GM12878 (cell line): ENCODE measurements at regions of chr7 and their contacts with region 1.

Region 1: DNA sequence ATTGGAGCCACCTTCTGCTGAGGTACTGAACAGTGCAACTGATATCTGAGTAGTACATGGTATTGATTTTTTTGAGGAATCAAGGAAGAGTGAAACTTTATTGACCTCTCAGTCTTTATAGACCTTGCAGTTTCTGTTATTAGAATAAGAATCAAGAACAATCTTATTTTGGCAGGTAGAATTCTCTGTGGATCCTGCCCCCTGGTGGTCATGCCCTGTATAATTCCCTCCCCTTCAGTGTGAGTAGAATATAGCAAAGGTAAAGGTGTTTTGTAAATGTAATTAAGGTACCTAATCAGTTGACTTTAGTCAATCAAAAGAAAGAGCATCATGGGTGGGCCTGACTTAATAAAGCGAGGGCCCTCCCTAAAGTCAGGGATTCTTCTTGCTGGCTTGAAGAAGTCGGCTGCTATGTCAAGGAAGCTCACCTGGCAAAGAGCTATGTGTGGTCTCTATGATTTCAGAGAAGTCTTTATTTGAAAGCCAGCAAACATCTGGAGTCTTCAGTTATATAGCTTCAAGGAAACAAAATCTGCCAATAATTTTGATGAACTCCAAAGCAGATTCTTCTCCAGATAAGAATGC is 142.8 kb downstream of the LSM5 start:
- DNase-seq: no peak
- ATAC-seq: peak; percentile 70
- H3K4me3 ChIP-seq: no peak overlapping the region
- H3K27ac ChIP-seq: no peak overlapping the region
- H3K4me1 ChIP-seq: no peaks in the 10 kb centered on the region
- H3K27me3 ChIP-seq: no peaks in the 10 kb centered on the region
- CTCF ChIP-seq: peak; percentile 62 to 66 (median 64)
- EP300 ChIP-seq: no peak
- POLR2A ChIP-seq: no peak
- RAD21 ChIP-seq: peak; percentile 57

Region 2: DNA sequence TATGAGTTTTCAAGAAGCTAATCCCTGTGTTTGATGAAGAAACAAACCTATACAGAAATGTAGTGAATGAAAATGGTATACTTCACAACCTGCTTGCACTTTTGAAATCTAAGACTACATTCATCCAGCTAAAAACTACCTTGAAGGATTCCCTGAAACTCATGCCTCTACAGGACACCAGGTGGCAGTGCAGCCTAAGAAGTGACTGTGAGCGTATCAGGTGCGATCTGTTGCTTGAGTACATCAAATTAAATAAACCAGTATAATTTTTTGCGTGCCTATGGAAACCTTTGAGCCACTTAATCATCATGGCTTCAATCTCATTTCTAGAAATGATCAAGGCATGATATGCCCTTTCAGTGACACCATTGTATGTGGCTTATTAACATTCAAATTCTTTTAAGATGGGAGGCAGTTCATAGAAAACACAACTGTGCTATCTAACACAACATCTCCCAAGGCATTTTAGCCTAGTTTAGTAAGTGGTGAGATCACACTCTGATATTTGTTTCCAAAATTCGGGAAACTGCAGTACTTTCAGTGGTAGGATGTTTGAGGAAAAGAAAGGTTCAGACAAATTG is 603.0 kb before region 1 on chr7:
- CTCF ChIA-PET with region 1: interaction called, 4 read pairs
- POLR2A ChIA-PET with region 1: no interaction called
- RAD21 ChIA-PET with region 1: interaction called, 4 read pairs
- SMC1A ChIA-PET with region 1: interaction called, 4 read pairs
- in situ Hi-C with region 1: no loop called
- intact Hi-C with region 1: loop called (anchors 2 kb)
- DNase-seq: peak; percentile 33
- ATAC-seq: peak; percentile 89
- H3K4me3 ChIP-seq: no peak overlapping the region
- H3K27ac ChIP-seq: no peak overlapping the region
- H3K4me1 ChIP-seq: no peaks in the 10 kb centered on the region
- H3K27me3 ChIP-seq: no peaks in the 10 kb centered on the region
- CTCF ChIP-seq: peak; percentile 76 to 88 (median 83)
- EP300 ChIP-seq: no peak
- POLR2A ChIP-seq: no peak
- RAD21 ChIP-seq: peak; percentile 98

Region 3: GRCh38 chr7:32079510-32079909 is 267.8 kb before region 1 on chr7:
- CTCF ChIA-PET with region 1: no interaction called
- POLR2A ChIA-PET with region 1: no interaction called
- RAD21 ChIA-PET with region 1: no interaction called
- SMC1A ChIA-PET with region 1: no interaction called
- in situ Hi-C with region 1: no loop called
- intact Hi-C with region 1: no loop called
- DNase-seq: no peak
- ATAC-seq: no peak
- H3K4me3 ChIP-seq: no peak overlapping the region
- H3K27ac ChIP-seq: no peak overlapping the region
- H3K4me1 ChIP-seq: no peaks in the 10 kb centered on the region
- H3K27me3 ChIP-seq: no peaks in the 10 kb centered on the region
- CTCF ChIP-seq: no peak
- EP300 ChIP-seq: no peak
- POLR2A ChIP-seq: no peak
- RAD21 ChIP-seq: no peak

Region 4: GRCh38 chr7:32212321-32212720 is 135.0 kb before region 1 on chr7:
- CTCF ChIA-PET with region 1: interaction called, 100 read pairs
- POLR2A ChIA-PET with region 1: no interaction called
- RAD21 ChIA-PET with region 1: interaction called, 50 read pairs
- SMC1A ChIA-PET with region 1: interaction called, 52 read pairs
- in situ Hi-C with region 1: loop called (anchors 5 kb)
- intact Hi-C with region 1: loop called (anchors 1 kb)
- DNase-seq: no peak
- ATAC-seq: no peak
- H3K4me3 ChIP-seq: no peak overlapping the region
- H3K27ac ChIP-seq: no peak overlapping the region
- H3K4me1 ChIP-seq: no peaks in the 10 kb centered on the region
- H3K27me3 ChIP-seq: no peaks in the 10 kb centered on the region; a peak in 1 of 4 replicates
- CTCF ChIP-seq: no peak
- EP300 ChIP-seq: no peak
- POLR2A ChIP-seq: no peak
- RAD21 ChIP-seq: no peak

Region 5: DNA sequence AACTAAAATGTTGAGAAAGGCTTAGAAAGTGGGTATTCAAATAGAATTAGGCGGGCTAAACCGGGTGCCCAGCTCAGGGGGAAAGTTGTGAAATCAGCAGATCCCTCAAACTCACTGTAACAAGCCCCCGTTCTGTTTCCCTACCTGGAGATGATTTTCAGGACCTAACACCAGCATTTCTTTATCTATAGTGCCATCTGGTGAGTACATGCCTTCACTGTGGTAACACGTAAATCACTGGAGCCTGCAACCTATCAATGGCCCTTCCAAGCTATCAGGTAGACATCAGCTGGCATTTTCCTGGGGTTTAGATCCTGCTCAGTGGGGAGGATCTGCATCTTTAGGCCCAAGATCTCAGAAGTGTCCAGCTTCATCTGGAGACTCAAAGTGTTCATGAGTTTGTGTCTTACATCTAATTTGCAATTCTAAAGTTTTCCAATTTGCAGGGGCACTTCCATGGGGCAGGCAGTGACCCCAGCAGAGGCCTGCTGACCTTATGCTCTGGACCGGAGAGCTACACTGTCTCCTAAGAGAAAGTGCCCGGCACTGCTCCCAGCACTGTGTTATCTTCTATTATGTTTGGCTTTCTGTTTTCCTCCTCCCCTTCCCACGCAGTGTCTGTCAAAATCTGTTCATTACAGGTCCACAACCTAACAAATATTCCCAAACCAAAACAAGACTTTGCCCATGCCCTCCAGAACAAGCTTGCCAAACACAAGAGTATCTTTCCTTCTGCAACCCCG is 10.4 kb after region 1 on chr7:
- CTCF ChIA-PET with region 1: interaction called, 27 read pairs
- POLR2A ChIA-PET with region 1: interaction called, 3 read pairs
- RAD21 ChIA-PET with region 1: interaction called, 4 read pairs
- SMC1A ChIA-PET with region 1: interaction called, 17 read pairs
- in situ Hi-C with region 1: no loop called
- intact Hi-C with region 1: no loop called
- DNase-seq: no peak
- ATAC-seq: peak; percentile 49
- H3K4me3 ChIP-seq: no peak overlapping the region
- H3K27ac ChIP-seq: no peak overlapping the region
- H3K4me1 ChIP-seq: no peaks in the 10 kb centered on the region
- H3K27me3 ChIP-seq: peaks cover 2% of the 10 kb centered on the region in 2 experiments; a peak in 1 of 4 replicates
- CTCF ChIP-seq: peak in 1 of 3 experiments; percentile 35; a peak in 1 of 6 replicates
- EP300 ChIP-seq: no peak
- POLR2A ChIP-seq: no peak
- RAD21 ChIP-seq: peak; percentile 42

Region 6: DNA sequence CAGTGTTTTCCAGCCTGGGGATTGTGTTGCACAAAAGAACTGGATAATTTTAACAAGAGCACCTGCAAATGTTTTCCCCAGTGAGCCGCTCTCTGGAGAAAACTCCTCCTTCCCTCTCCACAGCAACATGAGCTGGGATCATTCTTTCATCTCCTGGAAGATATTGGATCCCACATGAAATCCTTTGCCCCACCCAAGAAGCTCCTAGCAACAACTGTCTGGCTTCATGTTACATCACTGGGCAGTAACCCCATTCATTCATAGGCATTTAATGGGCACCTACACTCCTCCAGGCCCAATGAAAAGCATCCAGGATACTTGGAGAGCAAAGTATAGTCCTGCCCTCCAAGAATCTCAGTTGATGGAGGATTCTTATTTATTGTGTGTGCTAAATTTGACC is 115.6 kb after region 1 on chr7:
- CTCF ChIA-PET with region 1: no interaction called
- POLR2A ChIA-PET with region 1: no interaction called
- RAD21 ChIA-PET with region 1: no interaction called
- SMC1A ChIA-PET with region 1: no interaction called
- in situ Hi-C with region 1: no loop called
- intact Hi-C with region 1: no loop called
- DNase-seq: no peak
- ATAC-seq: no peak
- H3K4me3 ChIP-seq: no peak overlapping the region
- H3K27ac ChIP-seq: no peak overlapping the region
- H3K4me1 ChIP-seq: no peaks in the 10 kb centered on the region
- H3K27me3 ChIP-seq: no peaks in the 10 kb centered on the region
- CTCF ChIP-seq: no peak
- EP300 ChIP-seq: no peak
- POLR2A ChIP-seq: no peak
- RAD21 ChIP-seq: no peak

Region 7: GRCh38 chr7:32479574-32480200 is 132.4 kb after region 1 on chr7:
- CTCF ChIA-PET with region 1: interaction called, 6 read pairs
- POLR2A ChIA-PET with region 1: no interaction called
- RAD21 ChIA-PET with region 1: no interaction called
- SMC1A ChIA-PET with region 1: no interaction called
- in situ Hi-C with region 1: no loop called
- intact Hi-C with region 1: loop called (anchors 5 kb)
- DNase-seq: no peak
- ATAC-seq: peak; percentile 62
- H3K4me3 ChIP-seq: no peak overlapping the region
- H3K27ac ChIP-seq: no peak overlapping the region
- H3K4me1 ChIP-seq: no peaks in the 10 kb centered on the region
- H3K27me3 ChIP-seq: no peaks in the 10 kb centered on the region
- CTCF ChIP-seq: peak; percentile 75 to 78 (median 77)
- EP300 ChIP-seq: no peak
- POLR2A ChIP-seq: no peak
- RAD21 ChIP-seq: peak; percentile 82